ENCODE measurements at regions of chr22 and their contacts with region 1.

Region 1: GRCh38 chr22:38327805-38328204 is 10.6 kb upstream of the CSNK1E start:
- DNase-seq: no peak
- H3K4me3 ChIP-seq: no peak overlapping the region
- H3K27ac ChIP-seq: peak overlapping the region; percentile 60
- H3K4me1 ChIP-seq: peaks cover 14 to 36% (median 29%) of the 10 kb centered on the region in 4 experiments
- H3K27me3 ChIP-seq: no peaks in the 10 kb centered on the region
- CTCF ChIP-seq: no peak
- EP300 ChIP-seq: no peak
- POLR2A ChIP-seq: no peak
- RAD21 ChIP-seq: no peak

Region 2: GRCh38 chr22:38338772-38339379 is 11.1 kb after region 1 on chr22:
- CTCF ChIA-PET with region 1: interaction called, 4 read pairs
- POLR2A ChIA-PET with region 1: interaction called, 47 read pairs
- DNase-seq: no peak
- H3K4me3 ChIP-seq: no peak overlapping the region
- H3K27ac ChIP-seq: no peak overlapping the region
- H3K4me1 ChIP-seq: peaks cover under 1 to 13% (median 8%) of the 10 kb centered on the region in 4 experiments
- H3K27me3 ChIP-seq: no peaks in the 10 kb centered on the region
- CTCF ChIP-seq: no peak
- EP300 ChIP-seq: no peak
- POLR2A ChIP-seq: no peak
- RAD21 ChIP-seq: no peak

Region 3: GRCh38 chr22:38347897-38348750 is 20.3 kb after region 1 on chr22:
- CTCF ChIA-PET with region 1: interaction called, 4 read pairs
- POLR2A ChIA-PET with region 1: interaction called, 84 read pairs
- DNase-seq: peak in 1 of 2 experiments; percentile 52
- H3K4me3 ChIP-seq: no peak overlapping the region
- H3K27ac ChIP-seq: no peak overlapping the region
- H3K4me1 ChIP-seq: peaks cover 0 to 25% (median 4%) of the 10 kb centered on the region in 4 experiments; a peak in 6 of 7 replicates
- H3K27me3 ChIP-seq: no peaks in the 10 kb centered on the region
- CTCF ChIP-seq: no peak
- EP300 ChIP-seq: no peak
- POLR2A ChIP-seq: no peak
- RAD21 ChIP-seq: no peak

Region 4: DNA sequence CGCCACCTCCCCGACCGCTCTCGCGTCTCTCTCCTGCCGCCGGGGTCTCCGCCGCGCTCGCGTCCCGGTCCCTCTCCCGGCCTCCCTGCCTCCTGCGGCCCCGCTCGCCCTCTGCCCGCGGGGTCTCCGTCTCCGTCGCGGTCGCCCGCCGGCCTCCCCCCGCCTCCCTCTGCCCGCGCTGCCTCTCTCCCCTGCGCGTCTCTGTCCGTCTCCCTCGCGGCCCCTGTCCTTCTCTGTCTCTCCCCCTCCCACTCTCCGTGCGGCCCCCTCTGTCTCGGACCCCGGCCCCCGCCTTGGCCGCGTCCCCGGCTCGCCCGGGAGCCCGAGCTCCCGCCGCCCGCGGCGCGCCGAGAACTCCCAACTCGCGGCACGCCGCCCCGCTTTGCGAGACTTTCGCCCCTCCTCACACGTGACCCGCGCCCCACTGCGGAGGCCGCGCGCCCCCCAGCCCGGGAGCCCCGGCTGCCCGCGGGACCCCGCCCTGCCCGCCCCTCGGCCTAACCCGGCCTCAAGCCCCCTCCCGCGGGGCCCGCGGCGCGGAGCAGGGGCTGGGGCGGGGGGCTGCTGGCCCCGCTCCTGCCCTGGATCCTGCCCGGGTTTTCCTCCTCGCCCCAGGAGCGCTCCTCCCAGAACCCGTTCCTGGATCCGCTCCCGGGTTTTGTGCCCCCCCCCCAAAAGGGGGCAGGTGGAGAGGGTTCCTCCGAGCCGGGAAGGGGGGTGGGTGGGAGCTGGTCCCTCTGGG is 127.9 kb after region 1 on chr22:
- CTCF ChIA-PET with region 1: no interaction called
- POLR2A ChIA-PET with region 1: no interaction called
- DNase-seq: peak in 1 of 2 experiments; percentile 90
- H3K4me3 ChIP-seq: peak overlapping the region; percentile 40 to 89 (median 44)
- H3K27ac ChIP-seq: no peak overlapping the region
- H3K4me1 ChIP-seq: peaks cover 0 to 18% (median 9%) of the 10 kb centered on the region in 4 experiments; a peak in 6 of 7 replicates
- H3K27me3 ChIP-seq: peaks cover 15 to 47% (median 44%) of the 10 kb centered on the region in 4 experiments
- CTCF ChIP-seq: no peak
- EP300 ChIP-seq: peak in 1 of 2 experiments; percentile 75; a peak in 2 of 3 replicates
- POLR2A ChIP-seq: no peak
- RAD21 ChIP-seq: 0 out of 4 replicates have a peak, but pooled peaks of 1 of the 2 experiments have one; percentile 4

Measured in H1 (cell line).